GM12878 (cell line): ENCODE measurements at regions of chr11 and their contacts with region 1.

Region 1: DNA sequence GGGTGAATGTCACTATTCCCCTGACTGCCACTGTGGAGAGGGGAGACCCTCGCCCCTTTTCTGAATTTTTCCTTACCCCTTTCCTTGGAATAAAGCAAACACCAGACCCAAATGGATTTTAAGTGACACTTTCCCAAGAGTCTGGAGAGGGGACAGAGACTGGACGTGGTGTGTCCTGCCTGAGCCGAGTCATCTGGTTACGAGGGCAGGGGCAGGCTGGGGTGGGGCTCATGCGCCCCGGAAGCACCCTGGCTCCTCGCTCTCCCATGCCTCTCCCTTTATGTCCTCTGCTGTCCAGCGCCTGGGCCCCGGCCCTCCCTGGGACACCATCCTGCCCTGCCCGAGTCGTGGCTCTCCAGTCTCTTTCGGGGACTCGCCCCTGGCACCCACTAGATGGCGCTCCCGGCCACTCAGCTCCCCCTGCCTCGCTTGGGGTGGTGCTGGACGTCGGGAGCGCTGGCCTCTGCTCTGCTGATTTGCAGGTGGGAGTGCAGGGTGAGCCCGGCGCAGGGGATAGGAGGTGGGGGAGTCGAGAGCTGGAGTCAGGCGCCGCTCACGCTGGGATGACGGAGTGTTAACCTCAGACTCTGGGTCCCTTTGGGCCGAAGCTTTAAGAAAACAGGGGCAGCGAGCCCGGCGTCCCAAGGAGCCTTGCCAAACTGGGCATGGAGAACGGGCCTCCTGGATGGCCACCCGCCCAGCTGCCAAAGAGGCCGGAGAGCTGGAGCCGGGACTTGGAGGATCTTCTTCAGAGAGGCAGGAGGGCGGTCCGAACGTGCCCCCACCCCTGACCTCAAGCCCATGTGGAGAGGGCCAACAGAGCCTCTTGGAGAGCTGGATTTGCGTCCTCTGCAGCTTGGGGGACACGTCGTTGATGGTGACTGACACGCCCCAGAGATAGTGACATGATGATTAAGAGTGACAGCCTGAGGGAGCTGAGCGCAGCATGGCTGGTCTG is 89.9 kb downstream of the RPS6KA4 start:
- DNase-seq: no peak
- ATAC-seq: peak; percentile 95
- H3K4me3 ChIP-seq: peak overlapping the region; percentile 67
- H3K27ac ChIP-seq: peak overlapping the region; percentile 58
- H3K4me1 ChIP-seq: peaks cover 21% of the 10 kb centered on the region
- H3K27me3 ChIP-seq: 0 out of 4 replicates have a peak, but pooled peaks cover 0 to 2% of the 10 kb centered on the region in 2 experiments
- CTCF ChIP-seq: peak; percentile 80 to 90 (median 90)
- EP300 ChIP-seq: no peak
- POLR2A ChIP-seq: no peak
- RAD21 ChIP-seq: peak; percentile 56

Region 2: DNA sequence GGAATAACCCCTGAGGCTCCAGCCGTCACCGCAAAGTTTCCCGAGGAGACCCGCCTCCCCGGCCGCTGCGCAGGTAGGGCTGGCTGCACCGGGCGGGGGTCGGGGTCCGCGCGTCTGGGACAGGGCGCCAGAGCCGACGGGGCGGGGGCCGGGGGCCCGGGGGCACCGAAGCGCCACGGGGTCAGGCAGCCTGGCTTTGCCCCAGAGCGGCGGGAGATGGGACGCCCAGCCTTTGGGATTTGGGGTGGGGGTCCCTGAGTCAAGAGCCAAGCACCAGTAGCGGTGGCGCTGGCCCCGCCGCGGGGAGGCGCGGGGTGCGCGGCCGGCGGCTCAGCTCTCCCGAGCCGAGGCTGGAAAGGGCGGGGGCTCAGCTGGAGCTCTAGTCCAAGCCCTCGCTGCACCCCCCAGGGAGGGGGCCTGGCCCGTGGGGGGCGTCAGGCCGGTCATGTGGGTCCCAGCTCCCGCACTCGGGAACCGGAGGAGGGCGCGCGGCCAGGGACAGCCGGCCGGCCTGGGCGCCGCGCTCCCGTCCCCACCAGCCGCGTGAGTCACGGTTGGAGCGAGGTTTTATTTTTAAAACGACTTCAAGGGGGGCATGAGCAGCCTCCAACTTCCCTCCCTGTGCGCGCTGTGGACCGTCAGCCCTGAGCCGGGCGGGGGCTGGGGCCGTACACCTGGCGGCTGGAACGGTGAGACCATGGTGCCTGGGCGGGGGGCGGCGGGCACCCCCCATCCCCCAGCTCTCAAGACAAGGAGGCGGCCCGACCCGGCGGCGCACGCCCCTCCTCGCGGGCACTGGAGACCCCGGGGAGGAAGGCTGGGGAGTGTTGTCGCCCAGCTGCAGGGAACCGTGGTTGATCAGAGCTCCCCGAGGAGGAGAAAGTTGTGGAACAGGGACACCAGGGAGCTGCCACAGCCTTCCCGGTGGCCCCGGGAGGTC is 412.5 kb before region 1 on chr11:
- CTCF ChIA-PET with region 1: no interaction called
- POLR2A ChIA-PET with region 1: no interaction called
- RAD21 ChIA-PET with region 1: no interaction called
- SMC1A ChIA-PET with region 1: no interaction called
- in situ Hi-C with region 1: no loop called
- intact Hi-C with region 1: no loop called
- DNase-seq: no peak
- ATAC-seq: no peak
- H3K4me3 ChIP-seq: no peak overlapping the region
- H3K27ac ChIP-seq: no peak overlapping the region
- H3K4me1 ChIP-seq: no peaks in the 10 kb centered on the region
- H3K27me3 ChIP-seq: peaks cover 0 to 10% of the 10 kb centered on the region in 2 experiments; a peak in 3 of 4 replicates
- CTCF ChIP-seq: no peak
- EP300 ChIP-seq: no peak
- POLR2A ChIP-seq: no peak
- RAD21 ChIP-seq: no peak

Region 3: GRCh38 chr11:64224896-64225611 is 223.8 kb before region 1 on chr11:
- CTCF ChIA-PET with region 1: no interaction called
- POLR2A ChIA-PET with region 1: no interaction called
- RAD21 ChIA-PET with region 1: no interaction called
- SMC1A ChIA-PET with region 1: no interaction called
- in situ Hi-C with region 1: no loop called
- intact Hi-C with region 1: no loop called
- DNase-seq: no peak
- ATAC-seq: peak; percentile 1; the same call in 2 of the 3 replicates
- H3K4me3 ChIP-seq: peak overlapping the region; percentile 90
- H3K27ac ChIP-seq: peak overlapping the region; percentile 96
- H3K4me1 ChIP-seq: peaks cover 18% of the 10 kb centered on the region
- H3K27me3 ChIP-seq: no peaks in the 10 kb centered on the region
- CTCF ChIP-seq: no peak
- EP300 ChIP-seq: no peak
- POLR2A ChIP-seq: peak; percentile 22
- RAD21 ChIP-seq: no peak

Region 4: DNA sequence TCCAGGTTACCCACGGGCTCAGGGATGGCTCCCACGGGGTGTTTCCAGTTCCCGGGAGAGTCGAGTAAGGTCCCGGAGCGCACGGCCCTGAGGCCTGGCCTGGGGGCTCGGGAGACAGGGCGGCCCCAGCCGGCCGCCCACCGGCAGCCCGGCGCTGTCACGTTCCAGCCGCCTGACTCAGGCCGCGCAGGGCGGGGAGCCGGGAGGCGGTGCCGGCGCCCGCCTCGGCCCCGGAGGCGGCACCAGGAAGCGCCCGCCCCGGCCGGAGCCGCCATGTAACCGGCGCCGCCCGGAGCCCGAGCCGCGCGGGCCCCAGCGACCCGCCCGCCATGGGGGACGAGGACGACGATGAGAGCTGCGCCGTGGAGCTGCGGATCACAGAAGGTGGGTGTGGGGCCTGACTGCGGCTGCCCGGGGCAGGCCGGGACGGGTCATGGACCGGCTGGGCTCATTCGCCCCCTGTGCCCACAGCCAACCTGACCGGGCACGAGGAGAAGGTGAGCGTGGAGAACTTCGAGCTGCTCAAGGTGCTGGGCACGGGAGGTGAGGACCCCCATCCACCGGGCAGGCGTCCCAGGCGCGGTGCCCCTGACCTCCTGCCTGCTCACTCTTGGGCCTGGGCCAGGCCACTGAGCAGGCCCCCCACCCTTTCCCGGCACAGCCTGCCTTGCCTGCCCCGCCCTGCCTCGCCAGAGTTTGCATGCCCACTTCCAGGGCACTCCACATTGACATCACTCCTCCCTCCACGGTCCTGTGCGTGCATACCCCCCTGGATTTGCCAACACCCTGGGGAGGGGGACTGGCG is 89.8 kb before region 1 on chr11 and contains the start of gene RPS6KA4:
- CTCF ChIA-PET with region 1: interaction called, 24 read pairs
- POLR2A ChIA-PET with region 1: interaction called, 5 read pairs
- RAD21 ChIA-PET with region 1: interaction called, 8 read pairs
- SMC1A ChIA-PET with region 1: interaction called, 4 read pairs
- in situ Hi-C with region 1: no loop called
- intact Hi-C with region 1: loop called (anchors 5 kb)
- DNase-seq: no peak
- ATAC-seq: peak; percentile 85
- H3K4me3 ChIP-seq: peak within 1 kb of the TSS; percentile 69
- H3K27ac ChIP-seq: peak within 1 kb of the TSS; percentile 72
- H3K4me1 ChIP-seq: peaks cover 36% of the 10 kb centered on the region
- H3K27me3 ChIP-seq: no peaks in the 10 kb centered on the region
- CTCF ChIP-seq: no peak
- EP300 ChIP-seq: no peak
- POLR2A ChIP-seq: peak; percentile 82
- RAD21 ChIP-seq: no peak
- polyA plus RNA-seq, gene RPS6KA4: 0.34 to 0.73 TPM

Region 5: DNA sequence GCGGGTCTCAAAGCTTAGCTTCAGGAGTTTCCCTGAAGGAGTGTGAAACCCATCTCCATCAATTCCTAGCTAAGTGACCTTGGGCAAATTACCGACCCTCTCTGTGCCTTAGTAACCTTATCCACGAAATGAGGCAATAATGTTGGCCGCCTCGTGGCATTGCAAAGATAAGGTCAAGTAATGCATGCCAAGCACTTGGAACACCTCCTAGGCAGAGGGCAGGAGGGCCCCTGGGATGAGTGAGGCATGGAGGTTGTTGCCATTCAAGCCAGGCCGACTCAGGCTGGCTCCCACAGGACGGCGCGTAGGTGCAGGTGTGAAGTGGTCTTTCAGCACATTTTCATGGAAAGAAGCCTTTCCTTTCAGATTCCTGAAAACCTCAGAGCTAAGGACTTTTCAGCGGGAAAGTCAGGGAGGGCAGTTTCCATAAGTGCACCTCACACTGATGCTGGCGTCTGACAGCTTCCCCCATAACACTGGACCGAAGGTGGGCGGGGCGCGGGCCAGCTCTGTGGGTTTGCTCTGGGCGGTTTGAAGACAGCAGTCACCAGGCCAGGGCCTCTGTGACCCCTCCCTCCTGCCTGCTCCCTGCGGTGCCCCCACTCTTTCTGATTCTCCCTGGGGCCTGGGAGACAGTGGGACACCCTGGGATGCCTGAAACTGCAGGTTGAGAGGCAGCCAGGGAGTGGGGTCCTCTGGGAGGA is 64.7 kb before region 1 on chr11:
- CTCF ChIA-PET with region 1: no interaction called
- POLR2A ChIA-PET with region 1: no interaction called
- RAD21 ChIA-PET with region 1: no interaction called
- SMC1A ChIA-PET with region 1: no interaction called
- in situ Hi-C with region 1: no loop called
- intact Hi-C with region 1: no loop called
- DNase-seq: no peak
- ATAC-seq: no peak
- H3K4me3 ChIP-seq: no peak overlapping the region
- H3K27ac ChIP-seq: no peak overlapping the region
- H3K4me1 ChIP-seq: no peaks in the 10 kb centered on the region
- H3K27me3 ChIP-seq: peaks cover 0 to 2% of the 10 kb centered on the region in 2 experiments; a peak in 2 of 4 replicates
- CTCF ChIP-seq: no peak
- EP300 ChIP-seq: no peak
- POLR2A ChIP-seq: no peak
- RAD21 ChIP-seq: no peak

Region 6: GRCh38 chr11:64489831-64490441 is 41.1 kb after region 1 on chr11:
- CTCF ChIA-PET with region 1: interaction called, 13 read pairs
- POLR2A ChIA-PET with region 1: no interaction called
- RAD21 ChIA-PET with region 1: no interaction called
- SMC1A ChIA-PET with region 1: interaction called, 4 read pairs
- in situ Hi-C with region 1: no loop called
- intact Hi-C with region 1: no loop called
- DNase-seq: no peak
- ATAC-seq: peak; percentile 79
- H3K4me3 ChIP-seq: no peak overlapping the region
- H3K27ac ChIP-seq: no peak overlapping the region
- H3K4me1 ChIP-seq: peaks cover 3% of the 10 kb centered on the region; the same call in 1 of the 2 replicates
- H3K27me3 ChIP-seq: peaks cover 0 to 7% of the 10 kb centered on the region in 2 experiments; a peak in 3 of 4 replicates
- CTCF ChIP-seq: peak; percentile 55 to 74 (median 61)
- EP300 ChIP-seq: no peak
- POLR2A ChIP-seq: no peak
- RAD21 ChIP-seq: peak; percentile 36

Region 7: GRCh38 chr11:64638018-64638665 is 189.3 kb after region 1 on chr11:
- CTCF ChIA-PET with region 1: interaction called, 10 read pairs
- POLR2A ChIA-PET with region 1: no interaction called
- RAD21 ChIA-PET with region 1: interaction called, 3 read pairs
- SMC1A ChIA-PET with region 1: interaction called, 3 read pairs
- in situ Hi-C with region 1: no loop called
- intact Hi-C with region 1: no loop called
- DNase-seq: no peak
- ATAC-seq: peak; percentile 81
- H3K4me3 ChIP-seq: no peak overlapping the region
- H3K27ac ChIP-seq: no peak overlapping the region
- H3K4me1 ChIP-seq: no peaks in the 10 kb centered on the region
- H3K27me3 ChIP-seq: peaks cover 7 to 8% of the 10 kb centered on the region in 2 experiments; a peak in 3 of 4 replicates
- CTCF ChIP-seq: no peak
- EP300 ChIP-seq: no peak
- POLR2A ChIP-seq: no peak
- RAD21 ChIP-seq: no peak

Region 8: DNA sequence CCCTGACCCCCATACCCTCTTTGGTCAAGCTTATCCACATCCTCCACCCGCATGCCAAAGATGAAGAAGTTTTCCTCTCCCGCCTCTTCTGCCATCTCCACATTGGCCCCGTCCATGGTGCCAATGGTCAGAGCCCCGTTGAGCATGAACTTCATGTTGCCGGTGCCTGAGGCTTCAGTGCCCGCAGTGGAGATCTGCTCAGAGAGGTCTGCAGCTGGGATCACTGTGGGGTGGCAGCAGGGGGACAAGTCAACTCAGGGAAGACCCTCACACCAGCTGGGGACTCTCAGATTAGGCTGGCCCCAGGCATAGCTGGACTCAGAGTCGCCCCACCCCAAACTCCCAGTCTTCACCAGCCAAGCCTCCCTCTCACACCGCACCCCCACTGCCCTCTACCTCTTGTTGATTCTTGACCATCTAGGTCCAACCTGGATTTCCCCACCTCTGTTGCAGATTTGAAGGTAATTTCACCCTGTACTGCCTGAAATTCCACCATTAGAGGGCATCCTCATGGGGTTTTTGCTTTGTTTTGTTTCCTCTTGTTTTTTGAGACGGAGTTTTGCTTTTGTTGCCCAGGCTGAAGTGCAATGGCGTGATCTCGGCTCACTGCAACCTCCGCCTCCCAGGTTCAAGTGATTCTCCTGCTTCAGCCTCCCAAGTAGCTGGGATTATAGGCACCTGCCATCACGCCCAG is 301.6 kb after region 1 on chr11:
- CTCF ChIA-PET with region 1: no interaction called
- POLR2A ChIA-PET with region 1: no interaction called
- RAD21 ChIA-PET with region 1: no interaction called
- SMC1A ChIA-PET with region 1: no interaction called
- in situ Hi-C with region 1: no loop called
- intact Hi-C with region 1: no loop called
- DNase-seq: no peak
- ATAC-seq: no peak
- H3K4me3 ChIP-seq: no peak overlapping the region
- H3K27ac ChIP-seq: no peak overlapping the region
- H3K4me1 ChIP-seq: peaks cover 3% of the 10 kb centered on the region
- H3K27me3 ChIP-seq: no peaks in the 10 kb centered on the region
- CTCF ChIP-seq: 0 out of 6 replicates have a peak, but pooled peaks of 2 of the 3 experiments have one; percentile 5 to 19
- EP300 ChIP-seq: no peak
- POLR2A ChIP-seq: no peak
- RAD21 ChIP-seq: no peak